ENCODE measurements at regions of chr19 and their contacts with region 1.

Region 1: GRCh38 chr19:12194827-12195731 is 32.2 kb downstream of the ZNF136 start:
- DNase-seq: peak; percentile 69
- ATAC-seq: peak; percentile 97
- H3K4me3 Mint-ChIP-seq: peak overlapping the region; percentile 86
- H3K27ac Mint-ChIP-seq: peak overlapping the region; percentile 76
- H3K4me1 Mint-ChIP-seq: peaks cover 15% of the 10 kb centered on the region
- H3K27me3 Mint-ChIP-seq: no peaks in the 10 kb centered on the region
- CTCF ChIP-seq: no peak

Region 2: GRCh38 chr19:12162882-12163806 is 31.9 kb before region 1 on chr19 and contains the start of gene ZNF136:
- CTCF ChIA-PET with region 1: no interaction called
- POLR2A ChIA-PET with region 1: no interaction called
- intact Hi-C with region 1: loop called (anchors 2 kb)
- DNase-seq: peak; percentile 83
- ATAC-seq: peak; percentile 99
- H3K4me3 Mint-ChIP-seq: peak within 1 kb of the TSS; percentile 96
- H3K27ac Mint-ChIP-seq: peak within 1 kb of the TSS; percentile 97
- H3K4me1 Mint-ChIP-seq: peaks cover 44% of the 10 kb centered on the region
- H3K27me3 Mint-ChIP-seq: no peaks in the 10 kb centered on the region
- CTCF ChIP-seq: no peak
- total RNA-seq, gene ZNF136: 20.4 and 24.6 TPM in 2 replicates

Region 3: GRCh38 chr19:12205296-12205695 is 10.2 kb after region 1 on chr19:
- CTCF ChIA-PET with region 1: no interaction called
- POLR2A ChIA-PET with region 1: no interaction called
- intact Hi-C with region 1: no loop called
- DNase-seq: no peak
- ATAC-seq: peak; percentile 75
- H3K4me3 Mint-ChIP-seq: no peak overlapping the region
- H3K27ac Mint-ChIP-seq: no peak overlapping the region
- H3K4me1 Mint-ChIP-seq: peaks cover 6% of the 10 kb centered on the region
- H3K27me3 Mint-ChIP-seq: no peaks in the 10 kb centered on the region
- CTCF ChIP-seq: no peak

Measured in activated B cell treated with CpG ODN at 0.5 μM for 24 hours (primary cell).